Activated B cell treated with CpG ODN at 0.5 μM for 24 hours (primary cell): ENCODE measurements at regions of chr1 and their contacts with region 1.

Region 1: DNA sequence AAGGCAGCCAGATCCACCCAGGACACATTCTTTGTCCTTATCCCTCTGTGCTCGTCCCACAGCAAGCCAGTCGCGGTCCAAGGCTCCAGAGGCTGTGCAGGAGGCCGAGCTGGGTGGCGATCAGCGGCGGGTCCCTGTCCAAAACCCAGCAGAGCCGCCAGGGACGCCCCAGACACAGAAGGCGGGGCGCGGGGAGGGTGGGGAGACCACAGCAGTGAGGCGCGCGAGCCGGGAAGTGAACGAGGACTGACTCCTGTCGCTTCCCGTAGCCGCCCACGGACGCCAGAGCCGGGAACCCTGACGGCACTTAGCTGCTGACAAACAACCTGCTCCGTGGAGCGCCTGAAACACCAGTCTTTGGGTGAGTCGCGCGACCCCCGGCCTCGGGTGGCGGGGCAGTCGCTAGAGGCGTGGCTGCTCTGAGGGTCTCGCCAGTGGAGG is at the start of gene LGALS8:
- DNase-seq: peak; percentile 69
- ATAC-seq: peak; percentile 60
- H3K4me3 Mint-ChIP-seq: peak within 1 kb of the TSS; percentile 95
- H3K27ac Mint-ChIP-seq: peak within 1 kb of the TSS; percentile 90
- H3K4me1 Mint-ChIP-seq: peaks cover 12% of the 10 kb centered on the region
- H3K27me3 Mint-ChIP-seq: no peaks in the 10 kb centered on the region
- CTCF ChIP-seq: no peak
- total RNA-seq, gene LGALS8: 36.0 and 37.4 TPM in 2 replicates

Region 2: GRCh38 chr1:236795035-236795756 is 271.5 kb after region 1 on chr1 and contains the start of gene MTR:
- CTCF ChIA-PET with region 1: no interaction called
- POLR2A ChIA-PET with region 1: no interaction called
- intact Hi-C with region 1: loop called (anchors 2 kb)
- DNase-seq: peak; percentile 91
- ATAC-seq: peak; percentile 94
- H3K4me3 Mint-ChIP-seq: peak within 1 kb of the TSS; percentile 97
- H3K27ac Mint-ChIP-seq: peak within 1 kb of the TSS; percentile 98
- H3K4me1 Mint-ChIP-seq: peaks cover 41% of the 10 kb centered on the region
- H3K27me3 Mint-ChIP-seq: peaks cover 2% of the 10 kb centered on the region
- CTCF ChIP-seq: no peak
- total RNA-seq, gene MTR: 31.2 and 37.1 TPM in 2 replicates